Kidney (tissue), 22 donors: ENCODE measurements at regions of chr17 and their contacts with region 1.

Region 1: GRCh38 chr17:81101614-81102306 is 63.5 kb upstream of the PVALEF start:
- DNase-seq: peak; percentile 84 to 93 (median 87)
- H3K4me3 ChIP-seq: no peak overlapping the region
- H3K27ac ChIP-seq: no peak overlapping the region
- H3K4me1 ChIP-seq: peaks cover 0 to 7% (median 3%) of the 10 kb centered on the region in 3 donors
- H3K27me3 ChIP-seq: no peaks in the 10 kb centered on the region
- CTCF ChIP-seq: peak; percentile 99

Region 2: DNA sequence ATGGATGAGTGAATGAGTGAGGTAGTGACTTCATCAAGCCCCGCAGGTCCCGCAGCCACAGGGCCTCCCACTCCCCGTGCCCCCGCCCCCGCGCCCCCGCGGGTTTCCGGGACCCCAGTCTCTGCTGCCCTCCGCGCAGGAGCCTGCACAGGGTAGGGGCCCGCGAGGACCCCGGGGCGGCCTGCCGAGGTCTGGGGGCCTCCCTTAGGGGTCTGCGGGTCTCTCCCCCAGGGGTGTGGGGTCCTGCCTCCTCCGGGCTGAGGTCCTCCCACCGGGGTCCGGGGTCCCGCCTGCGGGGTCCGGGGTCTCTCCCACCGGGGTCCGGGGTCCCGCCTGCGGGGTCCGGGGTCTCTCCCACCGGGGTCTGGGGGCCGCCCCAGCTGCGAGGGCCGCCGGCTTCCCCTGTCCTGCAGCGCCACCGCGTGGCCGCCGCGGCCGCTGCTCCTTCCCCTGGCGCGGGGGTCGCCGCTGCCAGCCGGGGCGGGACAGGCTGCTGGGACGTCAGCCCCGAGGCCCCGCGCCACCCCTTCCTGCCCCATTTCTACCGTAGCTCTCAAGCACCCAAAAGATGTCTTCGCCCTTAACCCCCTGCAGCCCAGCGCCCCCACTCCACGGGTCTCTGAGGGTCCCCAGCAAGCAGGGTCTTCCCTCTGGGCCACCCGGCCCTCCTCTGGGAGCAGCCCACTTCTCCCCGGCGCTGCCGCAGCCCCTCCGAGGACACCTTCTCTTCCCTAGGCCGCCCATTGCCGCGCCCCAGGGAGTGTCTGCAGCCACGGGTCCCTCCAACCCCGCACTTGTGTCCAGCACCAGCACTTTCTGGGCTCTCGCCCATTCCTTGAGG is 120.5 kb before region 1 on chr17:
- intact Hi-C with region 1: loop called (anchors 5 kb)
- DNase-seq: no peak
- H3K4me3 ChIP-seq: no peak overlapping the region
- H3K27ac ChIP-seq: no peak overlapping the region
- H3K4me1 ChIP-seq: no peaks in the 10 kb centered on the region
- H3K27me3 ChIP-seq: peaks cover 2% of the 10 kb centered on the region
- CTCF ChIP-seq: peak; percentile 70